HAP-1 (cell line): ENCODE measurements at regions of chr7 and their contacts with region 1.

Region 1: DNA sequence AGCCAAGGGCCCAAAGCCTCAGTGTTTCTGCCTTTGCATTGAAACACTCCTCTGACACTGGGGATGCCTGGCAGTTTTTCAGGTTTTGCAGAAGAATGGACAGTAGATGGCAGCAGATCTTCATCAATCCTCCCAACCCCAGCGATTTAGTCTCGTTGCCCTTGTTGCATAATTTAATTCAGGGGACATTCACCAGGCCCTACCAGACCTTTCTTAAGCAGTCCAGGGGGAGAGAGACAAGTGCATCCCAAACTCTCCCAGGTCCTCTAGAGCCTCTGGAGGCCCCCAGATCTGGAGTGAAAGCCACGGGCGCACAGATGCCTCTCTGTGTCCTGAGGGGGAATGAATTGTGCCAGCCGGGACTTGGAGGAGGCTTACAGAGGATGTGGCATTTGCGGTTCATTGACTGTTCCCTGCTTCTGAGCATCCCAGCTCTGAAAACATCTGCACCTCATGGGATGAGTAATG is 29.6 kb downstream of the MINDY4 start:
- DNase-seq: peak; percentile 39 to 55
- H3K4me3 ChIP-seq: no peak overlapping the region
- H3K4me1 ChIP-seq: no peaks in the 10 kb centered on the region
- H3K27me3 ChIP-seq: no peaks in the 10 kb centered on the region

Region 2: GRCh38 chr7:30974605-30975255 is 173.9 kb after region 1 on chr7:
- in situ Hi-C with region 1: loop called (anchors 5 kb)
- DNase-seq: peak; percentile 26 to 64
- H3K4me3 ChIP-seq: no peak overlapping the region
- H3K4me1 ChIP-seq: no peaks in the 10 kb centered on the region
- H3K27me3 ChIP-seq: 0 out of 2 replicates have a peak, but pooled peaks cover 3% of the 10 kb centered on the region

Region 3: GRCh38 chr7:31043051-31043471 is 242.2 kb after region 1 on chr7:
- in situ Hi-C with region 1: no loop called
- DNase-seq: no peak
- H3K4me3 ChIP-seq: no peak overlapping the region
- H3K4me1 ChIP-seq: no peaks in the 10 kb centered on the region
- H3K27me3 ChIP-seq: 0 out of 2 replicates have a peak, but pooled peaks cover 3% of the 10 kb centered on the region

Region 4: GRCh38 chr7:31122649-31123058 is 321.8 kb after region 1 on chr7:
- in situ Hi-C with region 1: loop called (anchors 5 kb)
- DNase-seq: peak; percentile 54 to 74
- H3K4me3 ChIP-seq: no peak overlapping the region
- H3K4me1 ChIP-seq: no peaks in the 10 kb centered on the region
- H3K27me3 ChIP-seq: peaks cover 5% of the 10 kb centered on the region; the same call in 1 of the 2 replicates